ENCODE measurements at regions of chr1 and their contacts with region 1.

Region 1: GRCh38 chr1:151399890-151400495 is 620 bp downstream of the PSMB4 start:
- DNase-seq: no peak
- ATAC-seq: peak; percentile 16

Region 2: GRCh38 chr1:151222130-151222529 is 177.9 kb before region 1 on chr1:
- intact Hi-C with region 1: no loop called
- DNase-seq: no peak
- ATAC-seq: peak; percentile 75

Region 3: GRCh38 chr1:151346769-151347522 is 53.0 kb before region 1 on chr1 and contains the start of gene RFX5:
- intact Hi-C with region 1: loop called (anchors 10 kb)
- DNase-seq: peak; percentile 95
- ATAC-seq: peak; percentile 99
- total RNA-seq, gene RFX5: 21.1 TPM

Region 4: GRCh38 chr1:151624783-151625182 is 224.8 kb after region 1 on chr1:
- intact Hi-C with region 1: no loop called
- DNase-seq: no peak
- ATAC-seq: no peak